ENCODE measurements at regions of chr1 and their contacts with region 1.

Region 1: DNA sequence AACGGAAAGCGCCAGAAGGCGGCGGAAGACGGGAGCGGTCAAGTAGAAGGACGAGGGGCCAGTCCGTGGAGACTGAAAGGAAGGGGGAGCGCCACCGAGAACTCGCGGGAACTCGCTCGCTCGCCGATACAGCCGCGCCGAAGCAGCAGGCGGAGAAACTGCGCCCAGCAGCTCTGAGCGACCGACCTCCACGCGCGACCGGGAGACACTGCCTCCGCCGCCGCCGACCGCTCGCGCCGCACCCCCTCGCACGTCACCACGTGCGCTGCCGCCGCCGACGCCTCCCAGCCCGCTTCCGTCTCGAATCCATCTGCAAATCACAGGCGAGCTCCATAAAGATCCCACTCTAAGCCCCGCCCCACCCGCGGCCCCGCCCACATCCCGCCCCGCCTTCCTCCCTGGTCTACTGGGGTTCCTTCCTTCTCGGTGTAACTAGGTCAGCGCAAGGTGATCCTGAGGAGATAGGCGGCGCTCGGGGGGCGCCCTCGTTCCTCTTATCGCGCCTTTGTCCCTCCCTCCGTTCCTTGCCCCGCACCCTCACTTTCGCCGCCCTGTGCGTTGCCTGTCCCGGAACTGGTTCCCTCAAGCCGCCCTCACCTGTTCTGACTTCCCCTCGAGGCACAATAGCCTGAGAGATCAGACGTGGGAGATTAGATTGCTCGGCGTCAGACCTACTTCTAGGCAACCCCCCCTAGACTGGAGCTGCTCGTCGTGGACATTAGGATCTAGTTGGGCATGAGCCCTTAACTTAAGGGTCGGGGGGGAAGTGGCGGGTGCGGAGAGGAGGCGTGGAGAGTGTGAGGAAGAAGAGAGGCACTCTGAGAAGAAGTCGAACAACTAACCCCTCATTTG is at the start of gene IVNS1ABP:
- DNase-seq: peak; percentile 98
- H3K4me3 ChIP-seq: peak within 1 kb of the TSS; percentile 73 to 99 (median 94)
- H3K27ac ChIP-seq: peak within 1 kb of the TSS; percentile 95 to 100 (median 98)
- H3K4me1 ChIP-seq: peaks cover 21 to 59% (median 49%) of the 10 kb centered on the region in 6 donors
- H3K27me3 ChIP-seq: no peaks in the 10 kb centered on the region
- CTCF ChIP-seq: peak in 8 of 11 experiments; percentile 8 to 68 (median 38)
- POLR2A ChIP-seq: peak; percentile 78 to 96 (median 87)
- total RNA-seq, gene IVNS1ABP: 83.0 to 148 (median 115) TPM

Region 2: DNA sequence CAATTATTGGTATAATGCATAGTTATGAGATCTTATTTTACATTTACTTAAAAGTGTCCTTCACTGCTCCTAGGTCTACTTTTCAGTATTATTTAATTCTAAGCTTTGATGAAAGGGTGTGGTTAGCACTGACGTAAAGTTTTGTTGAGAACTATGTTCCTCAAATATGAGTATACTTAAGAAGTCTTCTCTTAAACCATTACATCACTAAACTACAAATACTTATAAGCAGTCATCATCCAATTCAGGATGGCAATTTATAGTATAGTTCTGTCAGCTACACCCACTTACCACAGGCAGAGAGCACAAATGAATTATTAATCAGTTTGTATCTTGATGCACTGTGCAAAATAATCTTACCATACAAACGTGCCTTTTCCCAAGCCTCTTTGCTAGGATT is 187.6 kb before region 1 on chr1:
- intact Hi-C with region 1: no loop called
- DNase-seq: no peak
- H3K4me3 ChIP-seq: no peak overlapping the region
- H3K27ac ChIP-seq: no peak overlapping the region
- H3K4me1 ChIP-seq: no peaks in the 10 kb centered on the region
- H3K27me3 ChIP-seq: no peaks in the 10 kb centered on the region
- CTCF ChIP-seq: no peak
- POLR2A ChIP-seq: no peak

Region 3: DNA sequence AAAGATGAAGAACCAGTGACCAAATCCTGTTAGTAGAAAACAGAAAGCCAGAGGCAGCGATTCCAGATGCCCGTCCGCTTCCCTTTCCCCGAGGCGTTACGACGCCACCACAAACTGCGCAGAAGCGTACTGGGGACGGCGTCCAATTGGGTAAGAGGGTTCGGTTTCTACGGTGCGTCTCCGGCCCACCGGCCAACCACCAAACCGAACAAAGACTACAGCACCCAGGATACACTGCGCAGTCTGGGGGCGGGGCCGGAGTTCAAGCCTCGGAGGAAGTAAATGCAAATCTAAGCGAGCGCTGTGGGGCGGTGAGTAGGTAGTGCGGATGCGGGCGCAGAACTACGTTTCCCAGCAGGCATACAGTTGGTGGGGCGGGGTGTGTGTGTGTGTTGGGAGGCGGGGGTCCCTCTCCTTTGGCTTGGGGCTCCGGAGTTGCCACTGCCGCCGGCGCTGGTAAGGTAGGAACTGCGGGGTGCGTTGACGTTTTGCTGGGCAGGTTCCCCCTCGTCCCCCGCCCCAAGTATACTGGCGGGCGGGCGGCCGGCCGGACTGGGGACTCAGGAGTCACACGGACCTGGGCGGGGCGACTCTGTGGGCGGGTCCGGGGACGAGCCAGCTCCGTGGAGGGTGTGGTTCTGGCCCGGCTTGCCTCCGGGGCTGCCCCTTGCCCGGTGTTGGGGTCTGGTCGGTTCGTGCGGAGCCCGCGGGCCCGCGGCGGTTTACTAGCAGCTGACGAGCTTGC is 160.2 kb before region 1 on chr1 and contains the starts of genes SWT1 and TRMT1L:
- intact Hi-C with region 1: loop called (anchors 10 kb)
- DNase-seq: peak; percentile 100
- H3K4me3 ChIP-seq: peak within 1 kb of the TSS; percentile 71 to 86 (median 78)
- H3K27ac ChIP-seq: peak within 1 kb of the TSS; percentile 98 to 100 (median 99)
- H3K4me1 ChIP-seq: peaks cover 15 to 60% (median 49%) of the 10 kb centered on the region in 6 donors
- H3K27me3 ChIP-seq: no peaks in the 10 kb centered on the region
- CTCF ChIP-seq: peak in 4 of 11 experiments; percentile 6 to 47 (median 28)
- POLR2A ChIP-seq: peak; percentile 95 to 99 (median 96)
- total RNA-seq, gene SWT1: 5.9 to 12.8 (median 7.2) TPM
- total RNA-seq, gene TRMT1L: 18.2 to 35.6 (median 22.6) TPM

Region 4: DNA sequence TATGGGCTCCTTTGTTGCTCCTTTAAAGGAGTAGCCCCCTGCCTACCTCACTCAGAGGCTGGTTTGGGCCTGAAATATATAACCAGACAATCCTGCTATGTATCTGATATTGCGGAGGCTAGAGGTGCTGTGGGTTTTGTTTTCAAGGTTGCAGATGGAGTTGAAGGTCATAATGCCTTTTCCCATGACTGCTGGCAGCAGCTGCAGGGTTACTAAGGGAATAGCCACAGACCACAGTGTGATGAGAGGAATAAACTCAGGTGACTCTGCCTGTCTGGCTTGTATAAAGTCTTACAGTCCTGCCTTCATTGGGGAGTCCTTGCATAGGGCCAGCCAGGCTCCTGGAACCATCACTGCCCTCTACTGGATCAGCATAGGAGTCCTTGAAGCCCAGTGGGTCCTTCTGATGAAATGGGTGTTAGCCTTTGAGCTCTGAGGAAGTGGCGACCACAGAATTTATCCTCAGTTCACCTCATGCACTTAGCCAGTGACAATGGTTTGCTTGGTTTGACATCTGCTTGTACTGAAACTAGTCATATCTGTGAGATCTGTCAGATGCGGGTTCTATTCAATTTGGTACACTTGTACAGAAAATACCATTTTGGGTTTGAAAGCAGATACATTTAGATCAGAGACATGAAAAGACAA is 242.5 kb after region 1 on chr1:
- intact Hi-C with region 1: loop called (anchors 10 kb)
- DNase-seq: peak; percentile 76
- H3K4me3 ChIP-seq: no peak overlapping the region
- H3K27ac ChIP-seq: peak overlapping the region in 4 of 8 donors; percentile 10 to 72 (median 45)
- H3K4me1 ChIP-seq: peaks cover 18 to 38% (median 25%) of the 10 kb centered on the region in 6 donors
- H3K27me3 ChIP-seq: no peaks in the 10 kb centered on the region
- CTCF ChIP-seq: peak in 9 of 11 experiments; percentile 13 to 63 (median 44)
- POLR2A ChIP-seq: no peak

Region 5: DNA sequence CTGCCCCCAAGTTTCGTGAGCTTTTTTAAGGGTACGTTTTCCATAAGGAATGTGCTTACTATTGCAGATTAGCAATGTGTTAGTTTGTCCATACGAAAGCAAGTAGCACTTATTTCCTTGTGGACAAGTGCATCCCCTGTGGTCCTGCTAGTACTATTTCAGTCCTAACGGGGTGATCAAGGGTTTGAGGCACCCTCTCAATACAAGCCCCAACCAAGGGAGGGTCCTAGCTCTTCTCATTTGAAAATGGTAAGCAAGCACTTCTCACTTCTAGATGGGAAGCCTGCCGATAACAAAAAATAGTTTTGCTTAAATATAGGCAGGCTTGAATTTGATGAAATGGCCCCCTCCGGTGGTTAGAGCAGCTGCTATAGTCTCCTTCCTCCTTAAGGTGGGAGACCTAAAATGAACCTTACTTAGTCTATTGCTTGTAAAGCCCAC is 352.9 kb after region 1 on chr1:
- intact Hi-C with region 1: loop called (anchors 5 kb)
- DNase-seq: no peak
- H3K4me3 ChIP-seq: no peak overlapping the region
- H3K27ac ChIP-seq: peak overlapping the region in 1 of 8 donors; percentile 7
- H3K4me1 ChIP-seq: peaks cover 10 to 39% (median 25%) of the 10 kb centered on the region in 6 donors
- H3K27me3 ChIP-seq: no peaks in the 10 kb centered on the region
- CTCF ChIP-seq: peak in 10 of 11 experiments; percentile 10 to 71 (median 58)
- POLR2A ChIP-seq: no peak

Measured in spleen (tissue), 13 donors.